PC-3 (cell line): ENCODE measurements at regions of chr3 and their contacts with region 1.

Region 1: GRCh38 chr3:158109804-158110657 is at the start of gene RSRC1:
- DNase-seq: peak; percentile 84
- ATAC-seq: peak; percentile 87
- H3K4me3 ChIP-seq: peak within 1 kb of the TSS; percentile 91
- H3K27ac ChIP-seq: peak within 1 kb of the TSS; percentile 83
- H3K4me1 ChIP-seq: peaks cover 12% of the 10 kb centered on the region
- H3K27me3 ChIP-seq: no peaks in the 10 kb centered on the region
- CTCF ChIP-seq: no peak
- total RNA-seq, gene RSRC1: 39.5 and 42.8 TPM in 2 replicates

Region 2: DNA sequence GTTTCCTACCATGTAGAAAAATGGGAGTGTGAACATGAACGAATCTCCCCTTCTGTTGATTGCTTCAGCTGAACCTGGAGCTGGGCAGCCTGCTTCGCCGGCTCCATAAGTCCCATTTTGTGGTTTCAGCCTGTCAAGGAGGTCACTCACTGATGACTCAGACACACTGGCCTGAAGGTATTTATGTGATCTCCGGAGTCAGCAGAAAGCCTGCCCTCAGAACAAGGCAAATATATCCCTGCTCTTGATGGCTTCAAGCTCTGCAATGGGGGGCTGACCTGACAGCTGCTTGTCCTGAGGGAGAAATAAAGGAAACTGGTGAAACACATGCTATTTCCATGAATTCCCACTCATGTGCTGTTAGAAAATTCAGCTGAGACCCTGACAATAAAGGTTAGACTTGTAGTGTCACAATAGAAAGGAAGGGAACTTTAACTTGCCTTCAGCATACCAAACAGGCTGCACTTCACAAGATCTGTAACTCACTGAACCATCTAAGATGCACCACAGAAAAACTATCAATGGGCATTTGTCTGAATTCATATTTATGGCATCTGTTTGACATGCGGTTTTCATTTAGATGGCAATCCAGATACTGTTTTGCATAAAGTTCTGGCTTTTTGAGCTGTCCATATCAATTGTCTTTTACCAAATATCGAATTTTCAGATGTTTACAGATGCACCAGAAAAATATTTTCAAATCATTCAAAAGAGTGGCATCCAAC is 324.8 kb before region 1 on chr3:
- CTCF ChIA-PET with region 1: no interaction called
- POLR2A ChIA-PET with region 1: interaction called, 11 read pairs
- intact Hi-C with region 1: no loop called
- DNase-seq: peak; percentile 97
- ATAC-seq: peak; percentile 89
- H3K4me3 ChIP-seq: peak overlapping the region; percentile 37; the same call in 1 of the 2 replicates
- H3K27ac ChIP-seq: peak overlapping the region; percentile 83
- H3K4me1 ChIP-seq: peaks cover 66% of the 10 kb centered on the region
- H3K27me3 ChIP-seq: no peaks in the 10 kb centered on the region
- CTCF ChIP-seq: no peak

Region 3: GRCh38 chr3:157981819-157982218 is 128.2 kb before region 1 on chr3:
- CTCF ChIA-PET with region 1: no interaction called
- POLR2A ChIA-PET with region 1: interaction called, 3 read pairs
- intact Hi-C with region 1: loop called (anchors 1 kb)
- DNase-seq: peak; percentile 90
- ATAC-seq: peak; percentile 92
- H3K4me3 ChIP-seq: peak overlapping the region; percentile 11; the same call in 1 of the 2 replicates
- H3K27ac ChIP-seq: peak overlapping the region; percentile 92
- H3K4me1 ChIP-seq: peaks cover 34% of the 10 kb centered on the region
- H3K27me3 ChIP-seq: no peaks in the 10 kb centered on the region
- CTCF ChIP-seq: no peak

Region 4: GRCh38 chr3:158121295-158121694 is 11.3 kb after region 1 on chr3:
- CTCF ChIA-PET with region 1: interaction called, 10 read pairs
- POLR2A ChIA-PET with region 1: no interaction called
- intact Hi-C with region 1: no loop called
- DNase-seq: no peak
- ATAC-seq: no peak
- H3K4me3 ChIP-seq: no peak overlapping the region
- H3K27ac ChIP-seq: no peak overlapping the region
- H3K4me1 ChIP-seq: no peaks in the 10 kb centered on the region
- H3K27me3 ChIP-seq: no peaks in the 10 kb centered on the region
- CTCF ChIP-seq: no peak

Region 5: GRCh38 chr3:158140396-158140795 is 30.4 kb after region 1 on chr3:
- CTCF ChIA-PET with region 1: no interaction called
- POLR2A ChIA-PET with region 1: interaction called, 15 read pairs
- intact Hi-C with region 1: no loop called
- DNase-seq: peak; percentile 46
- ATAC-seq: peak; percentile 92
- H3K4me3 ChIP-seq: no peak overlapping the region
- H3K27ac ChIP-seq: 0 out of 2 replicates have a peak overlapping the region, but pooled peaks have one; percentile 23
- H3K4me1 ChIP-seq: peaks cover 9% of the 10 kb centered on the region
- H3K27me3 ChIP-seq: no peaks in the 10 kb centered on the region
- CTCF ChIP-seq: no peak

Region 6: DNA sequence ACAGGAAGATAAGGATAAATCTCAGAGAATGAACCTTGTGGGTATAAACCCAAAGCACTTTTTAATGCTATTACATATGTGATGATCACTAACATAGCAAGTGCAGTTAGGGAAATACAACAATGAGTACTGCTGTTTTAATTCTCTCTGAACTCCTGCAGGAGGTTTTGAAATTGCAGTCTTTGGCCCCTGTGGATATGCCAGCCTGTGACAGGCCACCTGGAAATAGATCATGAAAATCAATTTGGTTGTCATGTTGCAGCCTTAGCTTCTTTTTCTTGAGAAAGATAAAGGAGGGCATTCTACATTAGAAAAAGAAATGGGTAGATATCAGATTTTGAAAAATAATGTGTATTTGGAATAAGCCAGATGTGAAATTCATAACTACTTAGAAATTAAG is 103.4 kb after region 1 on chr3:
- CTCF ChIA-PET with region 1: no interaction called
- POLR2A ChIA-PET with region 1: no interaction called
- intact Hi-C with region 1: loop called (anchors 5 kb)
- DNase-seq: no peak
- ATAC-seq: no peak
- H3K4me3 ChIP-seq: no peak overlapping the region
- H3K27ac ChIP-seq: no peak overlapping the region
- H3K4me1 ChIP-seq: peaks cover 8% of the 10 kb centered on the region; the same call in 1 of the 2 replicates
- H3K27me3 ChIP-seq: no peaks in the 10 kb centered on the region
- CTCF ChIP-seq: no peak

Region 7: DNA sequence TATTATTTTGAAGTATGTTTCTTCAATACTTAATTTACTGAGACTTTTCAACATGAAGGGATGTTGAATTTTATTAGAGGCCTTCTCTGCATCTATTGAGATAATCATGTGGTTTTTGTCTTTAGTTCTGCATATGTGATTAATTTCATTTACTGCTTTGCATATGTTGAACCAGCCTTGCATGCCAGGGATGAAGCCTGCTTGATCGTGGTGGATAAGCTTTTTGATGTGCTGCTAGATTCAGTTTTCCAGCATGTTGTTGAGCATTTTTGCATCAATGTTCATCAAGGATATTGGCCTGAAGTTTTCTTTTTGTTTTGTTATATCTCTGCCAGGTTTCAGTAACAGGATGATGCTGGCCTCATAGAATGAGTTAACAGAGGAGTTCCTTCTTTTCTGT is 134.2 kb after region 1 on chr3:
- CTCF ChIA-PET with region 1: no interaction called
- POLR2A ChIA-PET with region 1: no interaction called
- intact Hi-C with region 1: no loop called
- DNase-seq: no peak
- ATAC-seq: no peak
- H3K4me3 ChIP-seq: no peak overlapping the region
- H3K27ac ChIP-seq: no peak overlapping the region
- H3K4me1 ChIP-seq: no peaks in the 10 kb centered on the region
- H3K27me3 ChIP-seq: no peaks in the 10 kb centered on the region
- CTCF ChIP-seq: no peak

Region 8: DNA sequence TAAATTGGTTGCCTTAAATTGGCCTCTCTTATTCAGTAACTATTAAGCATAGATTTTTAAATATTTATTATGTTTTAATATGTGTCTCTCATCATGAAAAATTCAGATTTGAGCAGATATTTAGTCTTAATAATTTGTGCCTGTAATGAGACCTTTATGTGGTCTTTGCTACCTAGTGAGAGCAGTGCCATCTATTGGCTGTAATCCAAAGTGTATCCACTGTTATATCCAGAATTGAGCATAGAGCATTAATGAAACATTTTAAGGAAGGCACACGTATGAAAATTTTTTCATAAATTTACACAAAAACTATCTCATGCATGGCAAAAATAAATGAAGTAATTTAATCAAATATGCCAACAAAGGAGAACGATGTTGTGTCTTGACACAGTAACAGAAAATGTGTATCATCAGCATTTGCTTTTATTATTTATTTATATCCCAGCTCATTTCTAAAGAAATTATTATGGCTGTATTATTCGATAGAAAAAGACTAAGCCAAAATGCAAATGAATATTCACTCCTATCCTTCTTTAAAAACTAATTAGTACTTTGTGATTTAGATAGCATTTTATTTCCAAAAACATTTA is 203.4 kb after region 1 on chr3:
- CTCF ChIA-PET with region 1: no interaction called
- POLR2A ChIA-PET with region 1: interaction called, 26 read pairs
- intact Hi-C with region 1: loop called (anchors 5 kb)
- DNase-seq: peak; percentile 56
- ATAC-seq: no peak
- H3K4me3 ChIP-seq: no peak overlapping the region
- H3K27ac ChIP-seq: no peak overlapping the region
- H3K4me1 ChIP-seq: no peaks in the 10 kb centered on the region
- H3K27me3 ChIP-seq: no peaks in the 10 kb centered on the region
- CTCF ChIP-seq: peak; percentile 64